ENCODE measurements at regions of chr3 and their contacts with region 1.

Region 1: GRCh38 chr3:40179016-40179415 is 130.5 kb upstream of the EIF1B start:
- DNase-seq: peak; percentile 79
- ATAC-seq: peak; percentile 73 to 78

Region 2: DNA sequence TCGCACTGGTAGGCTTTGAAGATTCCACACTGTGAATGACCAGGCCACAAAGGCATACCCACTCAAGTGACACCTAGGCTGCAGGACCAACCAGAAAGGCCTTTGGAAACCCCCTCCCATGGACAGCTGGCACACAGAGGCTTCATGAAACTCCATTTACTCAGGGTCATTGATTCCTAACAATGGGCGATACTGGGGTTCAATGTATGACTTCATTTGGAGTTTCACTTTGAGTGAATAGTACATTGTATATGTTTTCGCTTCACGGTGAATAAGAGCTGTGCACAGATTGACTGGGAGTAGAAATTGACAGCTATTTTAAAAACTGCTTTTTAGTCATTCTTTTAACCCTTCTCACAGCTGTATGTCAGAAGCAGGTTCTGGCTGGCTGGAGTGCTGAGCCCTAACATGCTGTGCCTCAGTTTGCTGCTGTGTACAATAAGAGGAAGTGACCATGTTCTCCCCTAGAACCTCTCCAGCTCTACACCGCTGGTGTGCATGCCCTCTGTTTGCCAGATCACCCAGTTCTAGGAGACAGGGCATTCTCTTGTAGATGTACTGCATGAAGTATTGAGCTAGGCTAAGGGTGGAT is 883.7 kb before region 1 on chr3:
- intact Hi-C with region 1: no loop called
- DNase-seq: no peak
- ATAC-seq: no peak

Region 3: DNA sequence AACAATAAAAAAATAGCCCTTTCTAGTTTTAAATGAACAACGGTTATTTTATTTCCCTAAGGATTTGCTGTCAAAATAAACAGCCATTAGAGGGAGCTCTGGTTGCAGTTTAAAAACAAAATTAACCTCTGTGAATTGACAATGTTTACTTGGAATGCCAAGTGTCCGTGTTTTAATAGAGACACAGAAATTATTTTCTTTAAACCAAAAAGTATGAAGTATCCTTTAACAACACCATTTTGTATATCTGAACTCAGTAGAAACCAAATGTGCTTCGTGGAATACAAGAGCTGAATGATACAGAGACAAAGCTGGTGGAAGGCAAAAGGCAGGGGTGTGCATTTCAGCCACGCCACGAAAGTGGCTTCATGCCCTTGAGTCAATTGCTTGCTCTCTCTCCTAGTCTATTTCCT is 637.1 kb before region 1 on chr3:
- intact Hi-C with region 1: loop called in 1 of 2 experiments (anchors 5 kb)
- DNase-seq: no peak
- ATAC-seq: no peak

Region 4: DNA sequence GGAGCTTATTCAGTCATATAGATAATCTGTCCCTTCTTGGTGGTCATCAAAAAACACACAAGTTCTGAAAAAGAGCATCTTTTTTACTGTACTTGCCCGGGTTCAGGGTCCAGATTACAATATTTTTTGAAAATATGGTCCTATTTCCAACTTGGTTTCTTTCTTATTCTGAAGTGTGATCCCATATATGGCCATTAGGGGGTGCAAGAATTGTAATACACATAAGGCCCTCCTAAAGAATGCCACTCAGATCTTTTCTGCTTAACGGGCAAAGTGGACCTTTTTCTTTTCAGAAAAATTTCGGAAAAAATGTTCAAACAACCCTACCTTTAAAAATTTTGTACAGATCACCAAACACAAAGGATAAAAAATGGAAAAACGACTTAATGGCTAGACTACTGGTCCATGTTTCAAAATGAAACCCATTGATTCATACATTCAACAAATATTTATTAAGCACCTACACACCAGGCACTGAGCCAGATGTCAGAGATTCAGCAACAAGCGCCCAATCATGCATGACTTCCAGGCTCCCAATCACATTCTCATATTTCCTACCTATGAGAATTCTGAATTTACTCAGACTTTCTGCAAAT is 471.6 kb before region 1 on chr3:
- intact Hi-C with region 1: loop called (anchors 5 to 10 kb)
- DNase-seq: no peak
- ATAC-seq: no peak

Region 5: GRCh38 chr3:39724233-39724846 is 454.7 kb before region 1 on chr3:
- intact Hi-C with region 1: loop called in 1 of 2 experiments (anchors 1 kb)
- DNase-seq: no peak
- ATAC-seq: peak in 1 of 2 donors; percentile 44

Region 6: DNA sequence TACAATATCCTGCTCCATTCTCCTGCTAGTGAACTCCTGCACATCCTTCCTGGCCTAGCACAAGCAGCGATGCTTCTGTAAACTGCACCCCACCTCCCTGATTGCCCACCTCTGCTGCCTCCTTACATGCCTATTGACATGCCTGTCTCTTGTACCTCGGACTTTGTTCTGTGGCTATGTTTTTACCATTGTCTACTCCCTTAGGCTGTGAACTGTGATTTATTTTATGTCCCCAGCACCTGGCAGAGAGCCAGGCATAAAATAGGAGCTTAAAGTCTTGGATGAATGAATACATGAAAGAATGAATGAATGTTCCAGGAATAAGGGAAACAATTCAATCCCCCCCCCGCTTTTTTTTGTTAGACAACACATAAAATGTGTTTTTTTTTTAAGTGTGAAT is 159.6 kb before region 1 on chr3:
- intact Hi-C with region 1: no loop called
- DNase-seq: no peak
- ATAC-seq: no peak